ENCODE measurements at regions of chr11 and their contacts with region 1.

Region 1: GRCh38 chr11:131694526-131695424 is 324.4 kb downstream of the NTM start:
- DNase-seq: peak; percentile 73 to 93 (median 80)
- H3K4me3 ChIP-seq: peak overlapping the region in 41 of 59 donors; percentile 0 to 53 (median 25)
- H3K27ac ChIP-seq: peak overlapping the region in 52 of 59 donors; percentile 2 to 83 (median 59)
- H3K27me3 ChIP-seq: no peaks in the 10 kb centered on the region
- CTCF ChIP-seq: peak; percentile 66 to 99 (median 97)

Region 2: GRCh38 chr11:131748151-131749050 is 53.6 kb after region 1 on chr11:
- intact Hi-C with region 1: loop called in 1 of 2 experiments (anchors 5 kb)
- DNase-seq: peak; percentile 57 to 86 (median 80)
- H3K4me3 ChIP-seq: no peak overlapping the region
- H3K27ac ChIP-seq: peak overlapping the region in 12 of 59 donors; percentile 5 to 68 (median 20)
- H3K27me3 ChIP-seq: no peaks in the 10 kb centered on the region
- CTCF ChIP-seq: peak; percentile 74 to 96 (median 90)

Region 3: DNA sequence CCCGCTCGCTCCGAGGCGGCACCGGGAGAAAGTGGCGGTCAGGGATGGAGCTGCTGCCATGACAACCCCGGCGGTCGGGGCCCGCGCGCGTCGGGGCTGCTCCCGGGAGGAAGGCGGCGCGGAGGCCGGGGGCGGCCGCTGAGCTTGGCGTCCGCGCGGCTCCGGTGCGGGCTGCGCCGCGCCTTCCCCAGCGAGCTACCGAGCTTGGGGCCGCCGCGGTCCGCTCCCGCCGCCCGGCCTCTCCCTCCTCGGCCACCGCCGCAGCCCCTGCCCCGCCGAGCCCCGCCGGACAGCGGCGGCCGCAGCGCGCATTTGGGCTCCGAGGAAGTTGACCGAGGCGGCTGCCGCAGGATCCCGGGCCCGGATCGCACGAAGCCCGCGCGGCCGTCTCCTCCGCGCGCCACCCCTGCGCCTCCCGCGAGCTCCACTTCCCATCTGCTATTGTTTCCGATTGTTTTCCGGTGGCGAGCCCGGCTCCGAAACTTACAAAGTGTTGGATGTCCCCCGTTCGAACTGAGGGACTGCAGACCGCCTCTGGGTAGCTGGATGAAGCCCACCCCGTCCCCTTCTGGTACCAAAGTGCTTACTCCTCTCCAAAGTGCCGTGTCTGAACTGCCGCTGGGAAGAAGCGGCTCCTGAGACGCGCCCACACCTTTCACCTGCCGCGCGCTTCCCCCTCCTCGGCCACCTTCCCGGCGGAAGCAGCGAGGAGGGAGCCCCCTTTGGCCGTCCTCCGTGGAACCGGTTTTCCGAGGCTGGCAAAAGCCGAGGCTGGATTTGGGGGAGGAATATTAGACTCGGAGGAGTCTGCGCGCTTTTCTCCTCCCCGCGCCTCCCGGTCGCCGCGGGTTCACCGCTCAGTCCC is 216.0 kb after region 1 on chr11:
- intact Hi-C with region 1: loop called in 1 of 2 experiments (anchors 5 kb)
- DNase-seq: peak in 3 of 10 donors; percentile 62 to 71 (median 64)
- H3K4me3 ChIP-seq: peak overlapping the region; percentile 37 to 78 (median 62)
- H3K27ac ChIP-seq: peak overlapping the region in 49 of 59 donors; percentile 21 to 91 (median 74)
- H3K27me3 ChIP-seq: peaks cover 0 to 16% (median 0%) of the 10 kb centered on the region in 45 donors
- CTCF ChIP-seq: peak in 1 of 56 donors; percentile 3

Region 4: DNA sequence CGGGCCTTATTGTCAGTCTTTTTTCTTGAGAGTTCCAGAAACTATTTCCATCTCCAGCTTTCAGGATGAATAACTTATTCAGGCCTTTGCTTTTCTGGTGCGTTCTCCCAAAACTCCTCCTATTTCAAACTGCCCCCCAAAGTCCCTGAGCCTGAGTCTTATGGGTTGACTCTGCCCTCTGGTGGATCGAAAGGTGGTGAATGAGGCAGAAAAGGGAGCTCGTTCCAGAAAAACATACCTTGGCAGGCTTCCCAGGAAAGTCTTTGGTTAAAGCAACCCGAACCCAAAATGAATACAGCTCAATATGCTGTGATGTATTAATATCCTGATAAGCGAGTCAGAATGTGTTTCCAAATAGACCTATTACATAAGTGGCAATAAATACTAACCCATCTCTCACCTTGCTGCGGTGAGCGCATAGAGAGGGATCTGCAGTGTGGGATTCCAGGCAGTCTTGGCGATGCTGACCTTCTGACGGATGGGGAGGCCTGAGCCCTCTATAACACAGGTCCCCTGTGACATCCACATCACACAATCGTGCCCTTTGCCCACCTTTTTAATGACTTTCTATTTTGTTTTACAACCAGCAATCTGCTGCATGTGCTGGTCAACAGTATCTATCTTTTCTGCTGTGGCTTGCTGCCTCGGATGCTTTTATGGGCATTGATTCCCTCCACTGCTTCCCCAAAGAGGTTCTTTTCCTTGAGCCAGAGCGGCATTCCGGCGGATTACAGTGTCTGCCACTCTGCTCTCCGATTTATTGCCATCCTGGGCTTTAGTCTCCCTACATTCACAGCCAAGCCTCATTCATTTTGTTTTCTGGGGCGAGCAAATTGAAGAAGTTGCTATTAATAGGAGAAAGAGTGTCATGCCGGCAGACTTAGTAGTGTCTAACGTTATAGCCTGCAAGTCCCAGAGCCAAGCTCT is 432.5 kb after region 1 on chr11:
- intact Hi-C with region 1: loop called in 1 of 2 experiments (anchors 5 kb)
- DNase-seq: peak in 7 of 10 donors; percentile 47 to 87 (median 62)
- H3K4me3 ChIP-seq: peak overlapping the region in 58 of 59 donors; percentile 3 to 69 (median 49)
- H3K27ac ChIP-seq: peak overlapping the region in 54 of 59 donors; percentile 1 to 91 (median 76)
- H3K27me3 ChIP-seq: no peaks in the 10 kb centered on the region
- CTCF ChIP-seq: peak; percentile 36 to 86 (median 72)

Region 5: GRCh38 chr11:132941024-132941646 is 1246.4 kb after region 1 on chr11:
- intact Hi-C with region 1: loop called in 1 of 2 experiments (anchors 10 kb)
- DNase-seq: peak in 2 of 10 donors; percentile 44 to 69
- H3K4me3 ChIP-seq: peak overlapping the region in 15 of 59 donors; percentile 9 to 70 (median 28)
- H3K27ac ChIP-seq: peak overlapping the region in 34 of 59 donors; percentile 1 to 90 (median 38)
- H3K27me3 ChIP-seq: peaks cover 0 to 2% (median 0%) of the 10 kb centered on the region in 45 donors
- CTCF ChIP-seq: peak; percentile 81 to 97 (median 90)